GM12878 (cell line): ENCODE measurements at regions of chr5 and their contacts with region 1.

Region 1: DNA sequence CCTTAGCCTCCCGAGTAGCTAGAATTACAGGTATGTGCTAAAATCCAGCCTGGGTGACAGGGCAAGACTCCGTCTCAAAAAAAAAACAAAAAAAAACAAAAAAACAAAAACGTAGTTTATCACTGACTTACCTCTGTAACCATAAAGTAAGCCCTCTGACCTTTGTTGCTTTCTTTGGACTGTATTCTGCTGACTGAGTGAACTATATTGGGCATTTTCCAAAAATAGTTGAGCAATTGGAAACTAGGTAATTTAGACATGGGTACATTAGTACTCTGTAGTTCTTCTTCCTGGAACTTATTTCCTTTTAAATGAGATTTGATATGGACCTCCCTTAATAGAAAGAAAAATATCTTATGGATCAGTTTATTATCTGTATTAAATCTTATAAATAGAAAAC is 66.6 kb downstream of the ANKHD1 start:
- DNase-seq: no peak
- ATAC-seq: no peak
- H3K4me3 ChIP-seq: no peak overlapping the region
- H3K27ac ChIP-seq: no peak overlapping the region
- H3K4me1 ChIP-seq: no peaks in the 10 kb centered on the region
- H3K27me3 ChIP-seq: no peaks in the 10 kb centered on the region
- CTCF ChIP-seq: no peak
- EP300 ChIP-seq: no peak
- POLR2A ChIP-seq: no peak
- RAD21 ChIP-seq: no peak

Region 2: DNA sequence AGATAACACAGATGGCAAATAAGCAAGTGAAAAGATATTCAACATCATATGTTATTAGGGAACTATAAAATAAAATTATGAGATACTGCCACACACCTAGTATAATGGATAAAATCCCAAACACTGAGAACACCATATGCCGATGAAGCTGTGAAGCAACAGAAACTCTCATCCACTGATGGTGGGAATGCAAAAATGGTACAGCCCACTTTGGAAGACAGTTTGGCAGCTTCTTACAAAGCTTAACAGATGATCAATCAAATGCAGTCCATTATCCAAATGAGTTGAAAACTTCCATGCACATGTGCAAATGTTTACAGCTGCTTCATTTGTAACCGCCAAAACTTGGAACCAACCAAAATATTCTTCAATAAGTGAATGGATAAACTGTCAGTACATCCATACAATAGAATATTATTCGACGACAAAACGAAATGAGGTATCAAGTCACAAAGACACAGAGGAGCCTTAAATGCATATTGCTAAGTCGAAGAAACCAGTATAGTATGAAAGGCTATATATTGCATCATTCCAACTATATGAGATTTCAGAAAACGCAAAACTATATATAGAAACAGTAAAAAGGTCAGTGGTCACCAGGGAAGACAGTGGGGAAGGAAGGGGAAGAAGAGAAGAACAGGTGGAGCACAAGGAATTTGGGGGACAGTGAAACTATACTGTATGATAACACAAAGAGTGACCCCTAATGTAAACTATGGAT is 180.2 kb before region 1 on chr5:
- CTCF ChIA-PET with region 1: no interaction called
- POLR2A ChIA-PET with region 1: no interaction called
- RAD21 ChIA-PET with region 1: no interaction called
- SMC1A ChIA-PET with region 1: no interaction called
- in situ Hi-C with region 1: no loop called
- intact Hi-C with region 1: no loop called
- DNase-seq: no peak
- ATAC-seq: no peak
- H3K4me3 ChIP-seq: no peak overlapping the region
- H3K27ac ChIP-seq: no peak overlapping the region
- H3K4me1 ChIP-seq: peaks cover 11% of the 10 kb centered on the region
- H3K27me3 ChIP-seq: no peaks in the 10 kb centered on the region
- CTCF ChIP-seq: no peak
- EP300 ChIP-seq: no peak
- POLR2A ChIP-seq: no peak
- RAD21 ChIP-seq: no peak

Region 3: GRCh38 chr5:141094481-141095262 is 626.5 kb after region 1 on chr5 and contains the start of gene PCDHB2:
- CTCF ChIA-PET with region 1: no interaction called
- POLR2A ChIA-PET with region 1: no interaction called
- RAD21 ChIA-PET with region 1: no interaction called
- SMC1A ChIA-PET with region 1: no interaction called
- in situ Hi-C with region 1: no loop called
- intact Hi-C with region 1: no loop called
- DNase-seq: no peak
- ATAC-seq: no peak
- H3K4me3 ChIP-seq: no peak within 1 kb of the TSS
- H3K27ac ChIP-seq: no peak within 1 kb of the TSS
- H3K4me1 ChIP-seq: no peaks in the 10 kb centered on the region
- H3K27me3 ChIP-seq: no peaks in the 10 kb centered on the region
- CTCF ChIP-seq: peak in 1 of 3 experiments; percentile 15; a peak in 1 of 6 replicates
- EP300 ChIP-seq: no peak
- POLR2A ChIP-seq: no peak
- RAD21 ChIP-seq: no peak
- polyA plus RNA-seq, gene PCDHB2: not detected

Region 4: DNA sequence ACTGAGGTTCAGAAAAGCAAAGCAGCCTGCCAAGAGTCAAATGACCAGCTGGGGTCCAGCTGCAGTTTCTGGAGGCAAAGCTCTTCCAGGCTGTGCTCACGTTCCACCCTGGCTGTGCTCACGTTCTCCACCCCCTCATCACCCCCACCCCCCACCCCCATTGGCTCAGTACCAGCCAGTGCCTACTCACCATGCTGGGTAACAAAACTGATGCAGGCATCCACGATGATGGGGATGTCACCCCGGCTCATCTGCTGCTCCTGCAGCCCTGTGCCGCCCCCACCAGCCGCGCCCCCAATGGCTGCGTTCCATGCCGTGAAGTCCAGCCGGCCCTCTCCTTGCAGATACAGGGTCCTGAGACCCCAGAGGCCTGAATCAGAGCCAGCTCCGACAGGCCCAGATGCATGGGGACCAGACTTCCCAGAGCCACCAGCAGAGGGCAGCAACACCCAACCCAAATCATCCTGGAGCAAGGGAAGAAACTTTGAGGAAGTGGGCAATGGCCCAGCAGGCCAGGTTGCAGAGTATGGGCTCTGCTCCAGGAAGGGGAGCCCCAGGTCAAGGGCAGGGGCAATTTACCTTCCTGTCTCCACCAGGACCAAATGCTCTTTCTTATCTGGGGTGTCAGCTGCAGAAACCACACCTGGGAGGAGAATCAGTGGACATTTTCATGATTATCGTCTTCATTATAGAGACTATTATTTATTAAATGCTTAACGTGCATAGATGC is 1196.7 kb after region 1 on chr5:
- CTCF ChIA-PET with region 1: no interaction called
- POLR2A ChIA-PET with region 1: interaction called, 10 read pairs
- RAD21 ChIA-PET with region 1: no interaction called
- SMC1A ChIA-PET with region 1: no interaction called
- in situ Hi-C with region 1: no loop called
- intact Hi-C with region 1: no loop called
- DNase-seq: peak; percentile 31
- ATAC-seq: peak; percentile 100
- H3K4me3 ChIP-seq: no peak overlapping the region
- H3K27ac ChIP-seq: no peak overlapping the region
- H3K4me1 ChIP-seq: no peaks in the 10 kb centered on the region
- H3K27me3 ChIP-seq: no peaks in the 10 kb centered on the region
- CTCF ChIP-seq: peak; percentile 92 to 96 (median 94)
- EP300 ChIP-seq: no peak
- POLR2A ChIP-seq: no peak
- RAD21 ChIP-seq: peak; percentile 84